ENCODE measurements at regions of chr22 and their contacts with region 1.

Region 1: DNA sequence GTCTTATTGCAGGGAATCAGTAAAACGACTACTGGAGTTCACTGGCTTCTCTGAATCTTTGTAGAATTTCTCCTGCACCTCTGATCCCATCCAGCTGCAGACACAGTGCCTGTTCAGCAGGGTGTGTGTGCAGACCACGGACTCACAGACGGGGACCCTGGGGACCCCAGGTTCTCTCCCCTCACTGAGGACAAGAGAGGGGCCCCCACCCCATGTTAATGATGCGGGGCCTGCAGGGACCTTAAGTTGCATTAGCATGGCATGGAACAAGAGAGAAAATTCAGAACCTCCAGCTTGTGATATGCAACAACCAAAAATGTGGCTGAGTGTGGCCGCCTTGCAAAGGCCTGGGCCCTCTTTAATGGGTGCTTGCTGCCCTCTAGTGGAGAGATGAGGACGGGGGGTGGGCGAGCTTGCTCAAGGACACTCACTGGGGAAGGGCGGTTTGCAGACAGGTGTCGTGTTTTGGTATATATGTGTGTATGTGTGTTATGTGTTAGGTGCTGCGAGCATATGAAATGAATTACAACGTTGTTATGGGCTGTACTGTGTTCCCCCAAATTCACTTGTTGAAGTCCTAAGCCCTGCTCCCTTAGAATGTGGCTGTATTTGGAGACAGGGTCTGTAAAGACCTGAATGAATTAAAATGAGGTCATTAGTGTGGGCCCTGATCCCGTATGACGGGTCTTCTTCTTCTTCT is 84.4 kb upstream of the SEPTIN5 start:
- DNase-seq: peak; percentile 77
- ATAC-seq: peak; percentile 92

Region 2: GRCh38 chr22:19495562-19496323 is 134.1 kb before region 1 on chr22:
- intact Hi-C with region 1: loop called (anchors 10 kb)
- DNase-seq: no peak
- ATAC-seq: no peak

Region 3: GRCh38 chr22:20102203-20102780 is 472.4 kb after region 1 on chr22:
- intact Hi-C with region 1: no loop called
- DNase-seq: peak; percentile 19
- ATAC-seq: no peak